Naive thymus-derived CD4-positive, alpha-beta T cell (primary cell): ENCODE measurements at regions of chr19 and their contacts with region 1.

Region 1: GRCh38 chr19:45792470-45793177 is at the start of gene DMWD:
- DNase-seq: peak; percentile 95 to 99 (median 98)
- ATAC-seq: peak; percentile 98
- H3K4me3 ChIP-seq: peak within 1 kb of the TSS; percentile 61
- H3K4me3 Mint-ChIP-seq: peak within 1 kb of the TSS; percentile 84 to 93 (median 88)
- H3K27ac ChIP-seq: peak within 1 kb of the TSS; percentile 15
- H3K27ac Mint-ChIP-seq: peak within 1 kb of the TSS; percentile 45 to 93 (median 85)
- H3K4me1 ChIP-seq: peaks cover 25 to 28% of the 10 kb centered on the region in 2 donors
- H3K4me1 Mint-ChIP-seq: peaks cover 31 to 44% (median 41%) of the 10 kb centered on the region in 7 donors
- H3K27me3 ChIP-seq: peaks cover 0 to 8% of the 10 kb centered on the region in 2 donors
- H3K27me3 Mint-ChIP-seq: peaks cover 6 to 76% (median 37%) of the 10 kb centered on the region in 5 donors
- total RNA-seq, gene DMWD: 18.7 to 43.2 (median 35.4) TPM

Region 2: GRCh38 chr19:45717166-45717982 is 75.2 kb before region 1 on chr19:
- CTCF ChIA-PET with region 1: no interaction called
- POLR2A ChIA-PET with region 1: interaction called, 7 read pairs
- intact Hi-C with region 1: loop called in 1 of 2 experiments (anchors 1 kb)
- DNase-seq: peak; percentile 92 to 99 (median 98)
- ATAC-seq: peak; percentile 98
- H3K4me3 ChIP-seq: peak overlapping the region; percentile 80
- H3K4me3 Mint-ChIP-seq: peak overlapping the region; percentile 89 to 99 (median 95)
- H3K27ac ChIP-seq: peak overlapping the region; percentile 89
- H3K27ac Mint-ChIP-seq: peak overlapping the region; percentile 88 to 97 (median 96)
- H3K4me1 ChIP-seq: peaks cover 17 to 26% of the 10 kb centered on the region in 2 donors
- H3K4me1 Mint-ChIP-seq: peaks cover 26 to 55% (median 38%) of the 10 kb centered on the region in 7 donors
- H3K27me3 ChIP-seq: no peaks in the 10 kb centered on the region
- H3K27me3 Mint-ChIP-seq: no peaks in the 10 kb centered on the region

Region 3: DNA sequence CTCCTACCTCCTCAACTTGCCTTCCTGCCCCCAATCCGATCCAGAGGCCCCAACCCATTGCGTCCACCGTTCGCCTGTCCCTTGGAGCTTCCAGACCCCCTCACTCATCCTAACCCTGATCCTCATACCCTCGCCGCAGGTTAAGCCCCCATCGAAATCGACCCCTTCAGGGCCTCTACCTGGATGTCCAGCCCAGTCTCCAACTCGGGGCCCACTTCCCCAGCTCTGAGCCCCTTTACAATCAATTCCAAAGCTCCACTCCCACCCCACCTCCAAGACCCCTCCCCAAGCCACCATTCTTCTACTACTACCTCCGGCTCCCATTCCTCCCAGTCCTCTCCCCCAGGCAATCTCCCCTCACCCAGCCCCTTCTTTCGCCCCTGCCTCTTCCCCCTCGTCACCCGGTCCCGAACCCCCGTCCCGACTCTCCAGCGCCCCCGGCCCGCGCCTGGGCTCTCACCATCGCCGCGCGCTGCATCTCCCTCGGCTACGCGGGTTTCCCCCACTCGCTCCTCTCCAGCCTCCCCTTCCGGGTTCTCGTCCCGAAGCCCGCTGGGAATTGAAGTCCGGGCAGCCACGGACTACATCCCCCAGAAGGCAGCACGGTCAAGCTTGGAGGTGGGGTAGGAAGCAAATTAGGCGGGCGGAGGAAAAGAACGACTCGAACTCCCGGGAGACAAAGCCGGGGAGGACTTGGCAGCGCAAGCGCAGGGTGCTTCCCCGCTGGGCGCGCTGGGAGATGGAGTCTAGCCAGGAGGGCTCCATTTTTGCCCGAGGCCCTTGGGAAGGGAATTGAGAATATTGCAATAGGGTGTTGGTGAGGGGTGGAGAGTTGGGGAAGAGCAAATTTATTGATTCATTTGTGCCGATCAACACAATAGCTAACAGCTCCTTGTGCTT is 62.0 kb before region 1 on chr19 and contains the start of gene FBXO46:
- CTCF ChIA-PET with region 1: no interaction called
- POLR2A ChIA-PET with region 1: interaction called, 3 read pairs
- intact Hi-C with region 1: loop called in 1 of 2 experiments (anchors 2 kb)
- DNase-seq: peak; percentile 74 to 94 (median 90)
- ATAC-seq: peak; percentile 99
- H3K4me3 ChIP-seq: peak within 1 kb of the TSS; percentile 96
- H3K4me3 Mint-ChIP-seq: peak within 1 kb of the TSS; percentile 85 to 98 (median 92)
- H3K27ac ChIP-seq: peak within 1 kb of the TSS; percentile 92
- H3K27ac Mint-ChIP-seq: peak within 1 kb of the TSS; percentile 60 to 93 (median 91)
- H3K4me1 ChIP-seq: peaks cover 6 to 14% of the 10 kb centered on the region in 2 donors
- H3K4me1 Mint-ChIP-seq: peaks cover 27 to 41% (median 33%) of the 10 kb centered on the region in 7 donors
- H3K27me3 ChIP-seq: no peaks in the 10 kb centered on the region
- H3K27me3 Mint-ChIP-seq: peaks cover 0 to under 1% (median 0%) of the 10 kb centered on the region in 5 donors
- total RNA-seq, gene FBXO46: 21.2 to 52.9 (median 36.6) TPM

Region 4: DNA sequence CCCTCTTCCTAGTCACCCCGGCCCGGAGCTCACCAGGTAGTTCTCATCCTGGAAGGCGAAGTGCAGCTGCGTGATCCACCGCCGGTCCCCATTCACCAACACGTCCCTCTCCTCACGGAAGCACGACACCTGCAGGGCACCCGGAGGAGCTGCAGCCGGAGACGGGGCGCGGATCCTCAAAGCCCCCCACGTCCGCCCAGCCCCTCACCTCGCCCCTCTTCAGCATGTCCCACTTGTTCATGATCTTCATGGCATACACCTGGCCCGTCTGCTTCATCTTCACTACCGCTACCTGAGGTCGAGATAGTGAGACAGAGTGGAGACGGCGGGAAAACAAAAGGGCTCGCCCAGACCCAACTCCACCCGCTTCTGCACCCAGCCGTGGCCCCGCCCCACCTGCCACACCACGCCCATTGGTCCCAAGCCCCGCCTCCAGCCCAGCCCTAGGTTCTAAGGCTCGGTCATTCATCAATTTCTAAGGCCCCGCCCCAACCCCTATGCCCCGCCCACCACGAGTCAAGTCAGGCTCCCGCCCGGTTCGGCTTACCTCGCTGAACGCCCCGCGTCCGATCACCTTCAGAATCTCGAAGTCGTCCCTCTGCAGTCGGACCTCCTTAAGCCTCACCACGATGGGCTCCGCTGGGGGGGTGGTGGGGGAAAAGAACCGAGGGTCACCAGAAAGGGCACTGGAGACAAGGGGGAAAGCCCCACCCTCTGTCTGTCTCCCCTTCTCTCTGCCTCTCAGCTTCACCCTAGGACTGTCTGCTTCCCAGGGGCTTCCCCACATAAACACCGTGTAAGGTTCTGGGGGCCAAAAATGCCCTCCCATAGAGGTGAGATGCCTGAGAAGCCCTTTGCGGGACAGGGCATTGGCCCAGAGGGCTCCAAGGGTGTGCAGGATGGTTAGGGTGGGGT is 13.1 kb before region 1 on chr19:
- CTCF ChIA-PET with region 1: interaction called, 28 read pairs
- POLR2A ChIA-PET with region 1: interaction called, 7 read pairs
- intact Hi-C with region 1: loop called (anchors 1 kb)
- DNase-seq: peak; percentile 41 to 94 (median 59)
- ATAC-seq: peak; percentile 95
- H3K4me3 ChIP-seq: peak overlapping the region; percentile 59
- H3K4me3 Mint-ChIP-seq: peak overlapping the region; percentile 69 to 95 (median 81)
- H3K27ac ChIP-seq: no peak overlapping the region
- H3K27ac Mint-ChIP-seq: peak overlapping the region in 1 of 9 donors; percentile 69
- H3K4me1 ChIP-seq: peaks cover 7 to 17% of the 10 kb centered on the region in 2 donors
- H3K4me1 Mint-ChIP-seq: peaks cover 13 to 28% (median 18%) of the 10 kb centered on the region in 7 donors
- H3K27me3 ChIP-seq: peaks cover 0 to 18% of the 10 kb centered on the region in 2 donors
- H3K27me3 Mint-ChIP-seq: peaks cover 15 to 39% (median 36%) of the 10 kb centered on the region in 5 donors